HEK293 (cell line): ENCODE measurements at regions of chr2 and their contacts with region 1.

Region 1: GRCh38 chr2:31233741-31234682 is at the start of gene EHD3:
- H3K4me3 ChIP-seq: peak within 1 kb of the TSS; percentile 68
- H3K27ac ChIP-seq: no peak within 1 kb of the TSS; the same call in 1 of the 2 replicates
- H3K4me1 ChIP-seq: 0 out of 2 replicates have a peak, but pooled peaks cover 2% of the 10 kb centered on the region
- CTCF ChIP-seq: peak; percentile 86

Region 2: DNA sequence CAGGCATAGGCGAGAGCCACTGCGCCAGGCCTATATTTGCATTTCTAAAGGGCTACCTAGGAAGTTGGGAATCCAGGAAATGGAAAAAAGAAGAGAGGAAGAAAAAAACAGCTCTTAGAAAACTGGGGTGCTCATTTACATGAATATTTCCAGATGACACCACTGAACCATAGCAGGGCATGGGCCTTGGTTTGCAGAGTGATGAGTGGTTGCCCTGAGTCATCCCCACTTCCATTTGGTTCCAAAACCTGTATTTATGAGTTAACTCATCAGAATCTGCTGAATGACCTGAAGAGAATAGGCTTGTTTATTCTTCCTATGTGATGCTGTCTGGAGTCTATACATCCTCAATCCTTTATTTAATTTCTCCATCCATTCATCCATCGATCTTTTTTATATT is 36.1 kb after region 1 on chr2:
- CTCF ChIA-PET with region 1: interaction called, 11 read pairs
- POLR2A ChIA-PET with region 1: no interaction called
- H3K4me3 ChIP-seq: no peak overlapping the region
- H3K27ac ChIP-seq: no peak overlapping the region
- H3K4me1 ChIP-seq: no peaks in the 10 kb centered on the region
- CTCF ChIP-seq: no peak

Region 3: DNA sequence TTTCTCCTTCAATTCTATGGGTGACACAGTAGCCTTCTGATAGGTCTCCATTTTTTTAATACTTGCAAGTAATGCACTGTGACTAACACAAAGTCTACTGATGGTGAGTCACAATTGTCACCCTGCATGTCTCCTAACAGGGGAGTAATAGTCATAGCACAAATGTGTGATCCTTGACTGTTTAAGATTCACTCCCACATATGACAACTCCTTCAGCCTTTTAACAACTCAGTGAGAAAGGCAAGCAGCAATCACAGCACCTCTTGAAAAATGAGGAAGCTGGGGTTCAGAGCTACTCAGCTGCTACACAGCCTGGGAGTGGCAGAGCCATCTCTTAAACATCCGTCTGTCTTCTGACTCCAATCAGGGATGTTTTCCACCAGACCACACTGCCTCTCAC is 63.7 kb after region 1 on chr2:
- CTCF ChIA-PET with region 1: no interaction called
- POLR2A ChIA-PET with region 1: no interaction called
- H3K4me3 ChIP-seq: no peak overlapping the region
- H3K27ac ChIP-seq: no peak overlapping the region
- H3K4me1 ChIP-seq: no peaks in the 10 kb centered on the region
- CTCF ChIP-seq: no peak